OCI-LY7 (cell line): ENCODE measurements at regions of chr2 and their contacts with region 1.

Region 1: DNA sequence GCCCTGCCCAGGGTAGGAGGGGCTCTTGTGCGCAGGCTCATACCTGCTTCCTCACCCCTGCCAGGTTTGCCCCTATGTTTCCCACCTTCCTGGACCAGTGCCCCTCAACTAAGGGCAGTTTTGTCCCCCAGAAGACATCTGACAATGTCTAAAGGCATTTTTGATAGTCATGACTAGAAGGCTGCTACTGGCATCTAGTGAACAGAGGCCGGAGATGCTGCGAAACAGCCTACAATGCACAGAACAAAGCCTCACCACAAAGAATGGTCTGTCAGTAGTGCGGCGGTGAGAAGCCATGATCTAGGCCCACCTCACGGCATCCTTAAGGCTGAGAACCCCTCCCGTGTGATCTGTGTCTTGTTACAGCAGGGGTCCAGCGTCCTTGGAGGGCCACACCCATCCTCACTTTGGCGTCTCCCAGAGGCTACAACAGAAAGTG is 96.0 kb downstream of the TMEM17 start:
- DNase-seq: peak; percentile 62
- H3K4me3 ChIP-seq: no peak overlapping the region
- H3K27ac ChIP-seq: no peak overlapping the region
- H3K4me1 ChIP-seq: peaks cover 30% of the 10 kb centered on the region
- CTCF ChIP-seq: peak; percentile 69

Region 2: GRCh38 chr2:61922714-61923113 is 487.3 kb before region 1 on chr2:
- CTCF ChIA-PET with region 1: no interaction called
- POLR2A ChIA-PET with region 1: interaction called, 7 read pairs
- intact Hi-C with region 1: loop called (anchors 1 kb)
- DNase-seq: no peak
- H3K4me3 ChIP-seq: no peak overlapping the region
- H3K27ac ChIP-seq: no peak overlapping the region
- H3K4me1 ChIP-seq: no peaks in the 10 kb centered on the region
- CTCF ChIP-seq: no peak

Region 3: DNA sequence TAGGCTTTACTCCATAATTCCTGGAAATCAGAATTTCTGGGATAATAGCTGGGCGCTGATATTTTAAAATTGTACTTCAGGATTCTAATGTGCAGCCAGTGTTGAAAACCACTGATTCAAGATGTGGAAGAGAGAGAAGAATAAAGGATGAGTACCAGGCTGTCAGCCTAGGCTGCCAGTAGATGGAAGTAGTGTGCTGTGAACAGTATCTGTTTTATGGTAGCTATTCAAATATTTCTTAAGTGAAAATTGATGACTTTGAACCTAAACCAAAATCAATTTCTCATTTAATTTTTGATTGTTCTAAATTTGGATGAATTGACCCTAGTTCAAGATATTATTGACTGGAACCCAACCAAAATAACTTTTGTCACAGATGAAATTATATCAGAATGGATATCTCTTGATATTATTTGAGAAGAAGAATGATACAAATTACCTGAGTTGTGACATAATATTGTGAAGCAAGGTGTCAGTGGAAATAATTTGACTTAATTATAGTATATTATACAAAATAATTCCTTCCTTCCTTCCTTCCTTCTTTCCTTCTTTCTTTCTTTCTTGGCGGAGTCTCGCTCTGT is 416.5 kb before region 1 on chr2:
- CTCF ChIA-PET with region 1: interaction called, 3 read pairs
- POLR2A ChIA-PET with region 1: interaction called, 3 read pairs
- intact Hi-C with region 1: loop called (anchors 1 kb)
- DNase-seq: peak; percentile 80
- H3K4me3 ChIP-seq: no peak overlapping the region
- H3K27ac ChIP-seq: no peak overlapping the region
- H3K4me1 ChIP-seq: peaks cover 49% of the 10 kb centered on the region
- CTCF ChIP-seq: peak; percentile 99

Region 4: GRCh38 chr2:62175728-62176127 is 234.3 kb before region 1 on chr2:
- CTCF ChIA-PET with region 1: no interaction called
- POLR2A ChIA-PET with region 1: no interaction called
- intact Hi-C with region 1: no loop called
- DNase-seq: no peak
- H3K4me3 ChIP-seq: no peak overlapping the region
- H3K27ac ChIP-seq: peak overlapping the region; percentile 41
- H3K4me1 ChIP-seq: peaks cover 53% of the 10 kb centered on the region
- CTCF ChIP-seq: no peak